CD4-positive, alpha-beta memory T cell (primary cell): ENCODE measurements at regions of chr18 and their contacts with region 1.

Region 1: DNA sequence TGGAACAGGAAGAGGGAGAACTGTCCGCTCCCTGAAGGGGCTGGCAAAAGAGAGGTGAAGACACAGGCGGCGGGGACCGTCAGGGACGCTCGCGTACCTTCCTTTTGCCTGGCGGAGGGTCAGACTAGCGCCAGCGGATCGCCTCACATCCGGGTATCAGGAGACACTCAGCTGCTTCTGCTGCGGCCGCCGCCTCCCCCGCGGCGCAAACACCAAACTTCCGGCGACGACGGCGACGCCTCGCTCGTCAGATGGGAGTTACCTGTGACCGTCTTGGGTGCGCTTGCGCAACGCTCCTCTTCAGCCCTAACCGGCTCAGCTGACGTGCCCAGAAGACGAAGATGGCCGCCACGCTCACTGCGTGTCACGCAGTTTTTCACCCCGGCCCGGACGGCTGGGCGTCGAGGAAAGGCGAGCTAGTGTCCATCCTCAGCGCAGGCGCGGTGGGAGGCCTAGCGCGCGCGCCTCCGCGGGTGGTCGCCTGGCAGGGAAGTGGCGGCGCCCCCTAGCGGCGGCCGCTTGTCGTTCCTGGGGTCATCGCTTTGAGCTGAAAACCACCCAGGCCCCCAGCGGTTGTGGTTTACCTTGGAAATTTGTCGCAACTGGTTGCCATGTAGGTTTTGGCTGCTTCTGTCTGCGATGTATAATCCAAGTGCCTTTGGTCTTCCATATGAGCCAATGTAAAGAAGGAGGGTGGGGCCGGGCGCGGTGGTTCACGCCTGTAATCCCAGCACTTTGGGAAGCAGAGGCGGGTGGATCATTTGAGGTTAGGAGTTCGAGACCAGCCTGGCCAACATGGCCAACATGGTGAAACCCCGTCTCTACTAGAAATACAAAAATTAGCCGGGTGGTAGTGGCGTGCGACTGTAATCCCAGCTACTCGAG is at the start of gene ESCO1:
- DNase-seq: peak; percentile 96 to 98 (median 98)
- H3K4me3 ChIP-seq: peak within 1 kb of the TSS; percentile 90 to 98
- H3K4me3 Mint-ChIP-seq: peak within 1 kb of the TSS; percentile 93 to 99 (median 96)
- H3K27ac ChIP-seq: peak within 1 kb of the TSS; percentile 93
- H3K27ac Mint-ChIP-seq: peak within 1 kb of the TSS; percentile 98 to 100 (median 99)
- H3K4me1 ChIP-seq: peaks cover 35% of the 10 kb centered on the region
- H3K4me1 Mint-ChIP-seq: peaks cover 23 to 62% (median 29%) of the 10 kb centered on the region in 4 donors
- H3K27me3 ChIP-seq: no peaks in the 10 kb centered on the region
- H3K27me3 Mint-ChIP-seq: no peaks in the 10 kb centered on the region
- total RNA-seq, gene ESCO1: 32.3 to 38.2 TPM

Region 2: DNA sequence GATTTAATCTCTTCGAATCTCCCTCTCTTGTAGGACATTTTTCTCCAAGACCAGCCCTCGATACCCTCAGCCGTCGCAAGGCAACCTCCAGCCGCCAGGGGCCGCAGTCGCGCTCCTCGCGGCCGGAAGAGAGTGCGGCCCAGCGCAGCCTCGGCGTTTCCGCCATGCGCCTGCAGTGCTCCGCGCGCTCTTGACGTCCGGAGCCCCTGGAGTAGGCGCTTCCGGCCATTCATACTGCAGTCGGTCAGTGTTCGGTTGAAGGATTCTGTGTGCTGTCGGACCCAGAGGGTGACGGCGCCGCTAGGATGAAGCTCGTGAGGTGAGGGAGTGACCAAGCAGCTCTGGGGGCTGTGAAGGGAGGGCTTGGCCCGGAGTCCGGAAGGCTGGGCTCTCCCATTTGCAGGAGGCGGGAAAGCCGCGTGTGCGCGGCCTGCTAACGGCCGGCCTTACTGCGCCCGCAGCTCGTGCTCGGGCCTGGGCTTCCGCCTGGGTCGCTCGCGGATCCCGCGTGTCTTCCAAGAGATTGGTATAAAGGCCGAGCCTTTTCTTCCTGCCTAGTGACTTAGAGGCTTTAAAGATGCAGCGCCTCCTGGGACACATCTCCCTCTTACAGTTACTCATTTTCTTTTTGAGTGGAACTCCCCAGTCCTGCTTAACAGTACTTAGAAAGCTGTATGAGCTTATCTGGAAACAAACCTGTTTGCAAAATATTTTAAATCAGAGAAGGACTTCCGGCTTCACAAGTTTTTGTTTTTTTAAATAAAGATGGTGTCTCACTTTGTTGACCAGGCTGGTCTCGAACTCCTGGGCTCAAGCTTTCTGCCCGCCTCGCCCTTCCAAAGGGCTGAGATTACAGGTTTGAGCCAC is 11.6 kb after region 1 on chr18 and contains the start of gene SNRPD1:
- CTCF ChIA-PET with region 1: interaction called, 181 read pairs
- POLR2A ChIA-PET with region 1: interaction called, 144 read pairs
- intact Hi-C with region 1: loop called (anchors 1 kb)
- DNase-seq: peak; percentile 83 to 90 (median 86)
- H3K4me3 ChIP-seq: peak within 1 kb of the TSS; percentile 93 to 97
- H3K4me3 Mint-ChIP-seq: peak within 1 kb of the TSS; percentile 97 to 100 (median 99)
- H3K27ac ChIP-seq: peak within 1 kb of the TSS; percentile 85
- H3K27ac Mint-ChIP-seq: peak within 1 kb of the TSS; percentile 97 to 100 (median 99)
- H3K4me1 ChIP-seq: peaks cover 41% of the 10 kb centered on the region
- H3K4me1 Mint-ChIP-seq: peaks cover 26 to 55% (median 37%) of the 10 kb centered on the region in 4 donors
- H3K27me3 ChIP-seq: no peaks in the 10 kb centered on the region
- H3K27me3 Mint-ChIP-seq: no peaks in the 10 kb centered on the region
- total RNA-seq, gene SNRPD1: 24.4 to 24.5 TPM

Region 3: GRCh38 chr18:21669736-21670135 is 69.0 kb after region 1 on chr18:
- CTCF ChIA-PET with region 1: interaction called, 10 read pairs
- POLR2A ChIA-PET with region 1: interaction called, 4 read pairs
- intact Hi-C with region 1: no loop called
- DNase-seq: no peak
- H3K4me3 ChIP-seq: no peak overlapping the region
- H3K4me3 Mint-ChIP-seq: no peak overlapping the region
- H3K27ac ChIP-seq: no peak overlapping the region
- H3K27ac Mint-ChIP-seq: peak overlapping the region in 3 of 7 donors; percentile 15 to 60 (median 32)
- H3K4me1 ChIP-seq: no peaks in the 10 kb centered on the region
- H3K4me1 Mint-ChIP-seq: peaks cover 0 to 6% (median under 1%) of the 10 kb centered on the region in 4 donors
- H3K27me3 ChIP-seq: no peaks in the 10 kb centered on the region
- H3K27me3 Mint-ChIP-seq: no peaks in the 10 kb centered on the region

Region 4: DNA sequence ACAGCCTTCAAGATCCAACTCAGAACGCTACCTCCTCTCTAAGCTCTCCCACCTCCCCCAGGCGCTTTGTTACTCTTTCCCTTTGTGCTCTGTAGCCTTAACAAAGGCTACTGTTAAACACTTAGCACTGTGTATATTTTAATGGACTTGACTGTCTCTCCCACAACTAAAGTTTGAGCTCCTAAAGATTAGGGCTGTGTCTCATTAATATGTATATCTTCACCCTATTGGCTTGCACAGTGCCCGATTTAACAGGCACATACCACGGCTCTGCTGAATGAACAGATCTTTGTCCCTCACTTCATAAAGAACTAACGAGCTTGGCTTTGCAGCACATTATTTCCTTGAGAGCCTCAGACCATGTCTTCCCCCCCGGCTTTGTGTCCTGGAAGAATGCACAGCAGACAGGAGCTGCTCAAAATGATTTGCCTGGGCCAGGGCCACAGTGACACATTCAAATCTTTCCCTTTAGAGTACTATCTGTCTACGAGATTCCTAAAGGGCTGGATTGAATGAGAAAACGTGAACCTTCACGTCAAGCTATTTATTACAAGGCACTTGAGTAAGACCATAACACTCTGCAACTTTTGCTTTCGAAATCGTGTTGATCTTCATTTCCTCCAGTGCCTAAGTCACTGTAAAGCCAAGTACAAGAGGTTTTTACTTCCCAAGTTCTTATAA is 81.7 kb after region 1 on chr18:
- CTCF ChIA-PET with region 1: interaction called, 11 read pairs
- POLR2A ChIA-PET with region 1: interaction called, 12 read pairs
- intact Hi-C with region 1: no loop called
- DNase-seq: peak in 4 of 5 donors; percentile 43 to 54 (median 48)
- H3K4me3 ChIP-seq: peak overlapping the region; percentile 61 to 66
- H3K4me3 Mint-ChIP-seq: no peak overlapping the region
- H3K27ac ChIP-seq: peak overlapping the region; percentile 63
- H3K27ac Mint-ChIP-seq: no peak overlapping the region
- H3K4me1 ChIP-seq: peaks cover 37% of the 10 kb centered on the region
- H3K4me1 Mint-ChIP-seq: peaks cover 9 to 19% (median 15%) of the 10 kb centered on the region in 4 donors
- H3K27me3 ChIP-seq: no peaks in the 10 kb centered on the region
- H3K27me3 Mint-ChIP-seq: no peaks in the 10 kb centered on the region

Region 5: GRCh38 chr18:21704603-21705364 is 104.0 kb after region 1 on chr18 and contains the start of gene ABHD3:
- CTCF ChIA-PET with region 1: interaction called, 8 read pairs
- POLR2A ChIA-PET with region 1: interaction called, 46 read pairs
- intact Hi-C with region 1: loop called (anchors 1 kb)
- DNase-seq: peak; percentile 90 to 93 (median 92)
- H3K4me3 ChIP-seq: peak within 1 kb of the TSS; percentile 82 to 92
- H3K4me3 Mint-ChIP-seq: peak within 1 kb of the TSS; percentile 97 to 99 (median 98)
- H3K27ac ChIP-seq: peak within 1 kb of the TSS; percentile 81
- H3K27ac Mint-ChIP-seq: peak within 1 kb of the TSS; percentile 94 to 96 (median 95)
- H3K4me1 ChIP-seq: peaks cover 24% of the 10 kb centered on the region
- H3K4me1 Mint-ChIP-seq: peaks cover 19 to 44% (median 30%) of the 10 kb centered on the region in 4 donors
- H3K27me3 ChIP-seq: no peaks in the 10 kb centered on the region
- H3K27me3 Mint-ChIP-seq: no peaks in the 10 kb centered on the region
- total RNA-seq, gene ABHD3: 63.0 to 65.6 TPM

Region 6: GRCh38 chr18:21740724-21741510 is 140.1 kb after region 1 on chr18 and contains the start of gene MIB1:
- CTCF ChIA-PET with region 1: interaction called, 21 read pairs
- POLR2A ChIA-PET with region 1: interaction called, 52 read pairs
- intact Hi-C with region 1: loop called (anchors 1 kb)
- DNase-seq: peak in 2 of 5 donors; percentile 98 to 99
- H3K4me3 ChIP-seq: peak within 1 kb of the TSS in 1 of 2 donors; percentile 100
- H3K4me3 Mint-ChIP-seq: peak within 1 kb of the TSS; percentile 94 to 98 (median 95)
- H3K27ac ChIP-seq: peak within 1 kb of the TSS; percentile 94
- H3K27ac Mint-ChIP-seq: peak within 1 kb of the TSS; percentile 91 to 98 (median 97)
- H3K4me1 ChIP-seq: peaks cover 48% of the 10 kb centered on the region
- H3K4me1 Mint-ChIP-seq: peaks cover 29 to 70% (median 47%) of the 10 kb centered on the region in 4 donors
- H3K27me3 ChIP-seq: no peaks in the 10 kb centered on the region
- H3K27me3 Mint-ChIP-seq: no peaks in the 10 kb centered on the region
- total RNA-seq, gene MIB1: 37.6 to 39.0 TPM